ENCODE measurements at regions of chr13 and their contacts with region 1.

Region 1: GRCh38 chr13:82693607-82694006 is 1188.7 kb downstream of the SLITRK1 start:
- DNase-seq: no peak
- ATAC-seq: no peak

Region 2: DNA sequence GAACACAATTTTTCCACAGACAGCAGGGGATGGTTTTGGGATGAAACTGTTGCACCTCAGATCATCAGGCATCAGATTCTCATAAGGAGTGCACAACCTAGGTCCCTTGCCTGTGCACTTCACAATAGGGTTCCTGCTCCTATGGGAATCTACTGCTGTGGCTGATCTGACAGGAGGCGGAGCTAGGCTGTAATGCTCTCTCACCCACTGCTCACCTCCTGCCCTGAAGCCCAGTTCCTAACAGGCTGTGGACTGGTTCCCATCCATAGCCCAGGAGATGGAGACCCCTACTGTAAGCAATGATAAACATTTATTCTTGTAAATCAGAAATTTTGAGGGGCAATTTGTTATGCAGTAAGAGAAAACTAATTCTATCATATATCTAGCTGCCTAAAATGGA is 46.1 kb before region 1 on chr13:
- intact Hi-C with region 1: no loop called
- DNase-seq: no peak
- ATAC-seq: no peak

Region 3: GRCh38 chr13:83955011-83955410 is 1261.4 kb after region 1 on chr13:
- intact Hi-C with region 1: loop called (anchors 5 kb)
- DNase-seq: no peak
- ATAC-seq: no peak

Measured in sciatic nerve (tissue), 2 donors.